ENCODE measurements at regions of chr22 and their contacts with region 1.

Region 1: DNA sequence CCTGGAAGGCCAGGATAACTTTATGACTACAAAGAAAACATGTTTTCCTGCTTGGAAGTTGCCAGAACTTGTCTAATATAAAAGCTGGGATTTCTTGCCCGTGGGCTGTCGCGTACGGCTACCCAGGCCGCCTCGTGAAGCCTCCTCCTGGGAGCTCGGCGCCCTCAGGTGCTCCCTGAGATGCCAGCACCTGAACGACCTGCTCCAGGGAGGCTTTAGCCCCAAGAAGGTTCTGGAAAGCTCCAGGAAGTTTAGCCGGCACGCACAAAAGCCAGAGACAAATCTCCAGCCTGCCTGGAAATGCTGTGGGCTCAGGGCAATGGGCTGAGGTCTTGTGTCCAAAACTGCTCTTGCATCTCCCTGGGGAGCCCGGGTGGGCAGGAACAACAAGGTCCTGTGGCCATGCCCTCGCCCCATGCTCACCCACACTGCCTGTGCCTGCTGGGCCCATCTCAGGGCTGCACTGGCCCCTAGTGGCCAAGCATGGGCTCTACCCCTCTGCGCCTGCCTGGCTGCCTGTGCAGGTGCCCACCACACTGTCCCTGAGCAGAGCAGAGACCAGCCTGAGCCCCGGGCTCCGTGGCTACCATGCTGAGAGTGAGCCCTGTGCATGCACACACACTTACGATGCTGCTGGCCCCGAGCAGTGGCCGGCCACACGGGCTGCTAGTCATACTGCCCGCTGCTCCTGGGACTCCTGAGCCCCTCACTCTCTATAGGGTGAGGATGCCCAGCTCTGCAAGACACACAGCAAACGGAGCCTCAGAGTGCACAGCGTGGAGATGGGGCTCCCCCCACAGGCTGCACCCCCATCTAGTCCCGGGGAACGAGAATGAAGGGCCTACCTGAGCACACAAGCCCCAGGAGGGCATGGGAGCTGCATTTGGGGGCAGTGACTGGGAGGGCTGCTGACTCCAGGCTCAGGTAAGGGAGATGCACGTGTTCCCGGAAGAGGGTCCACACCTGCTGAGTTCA is 4.9 kb upstream of the CELSR1 start:
- DNase-seq: peak; percentile 76
- H3K4me3 ChIP-seq: no peak overlapping the region
- H3K27ac ChIP-seq: no peak overlapping the region
- H3K4me1 ChIP-seq: peaks cover 10% of the 10 kb centered on the region
- H3K27me3 ChIP-seq: peaks cover 11% of the 10 kb centered on the region
- CTCF ChIP-seq: peak; percentile 96

Region 2: DNA sequence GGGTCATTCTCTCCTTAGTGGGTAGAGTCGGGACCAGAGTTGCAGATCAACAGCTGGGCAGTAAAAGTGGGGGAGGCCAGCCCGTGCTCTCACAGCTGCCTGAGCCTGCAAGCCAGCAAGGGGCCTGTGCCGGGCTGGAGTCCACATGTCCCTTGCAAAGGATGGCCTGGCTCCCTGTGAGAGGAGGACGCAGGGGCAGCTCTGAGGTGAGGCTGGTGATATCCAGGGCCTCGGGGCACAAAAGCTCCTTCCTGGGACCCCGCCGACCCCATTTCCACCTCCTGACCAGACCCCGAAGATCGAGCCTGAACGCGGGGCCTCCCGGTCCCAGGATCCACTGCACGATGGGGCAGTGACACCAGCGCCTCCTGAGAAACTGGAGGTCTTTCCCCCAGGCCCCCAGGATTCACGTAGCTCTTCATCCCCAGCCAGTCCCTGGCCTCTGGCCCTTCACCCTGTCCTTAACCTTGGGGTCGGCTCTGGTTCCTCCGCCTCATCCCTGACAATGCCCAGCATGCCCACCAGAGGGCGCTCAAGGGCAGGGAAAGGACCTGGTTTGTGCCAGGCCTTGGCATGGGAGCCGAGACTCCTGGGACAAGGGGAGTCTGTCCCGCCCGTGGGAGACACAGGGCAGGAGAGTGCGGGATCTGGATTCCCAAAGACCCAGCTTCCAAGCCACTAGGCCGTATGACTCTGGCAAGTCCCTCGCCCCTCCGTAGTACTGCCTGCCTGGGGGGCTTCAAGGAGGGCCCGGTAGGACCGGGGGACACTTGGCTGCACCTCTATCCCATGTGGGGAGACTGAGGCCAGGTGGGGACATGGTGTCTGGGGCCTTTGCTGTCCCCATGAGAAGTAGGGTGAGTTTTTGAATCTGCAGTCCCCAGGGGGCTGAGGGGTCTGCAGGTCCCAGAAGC is 547.5 kb before region 1 on chr22:
- CTCF ChIA-PET with region 1: no interaction called
- POLR2A ChIA-PET with region 1: no interaction called
- intact Hi-C with region 1: loop called (anchors 10 kb)
- DNase-seq: peak; percentile 80
- H3K4me3 ChIP-seq: no peak overlapping the region
- H3K27ac ChIP-seq: no peak overlapping the region
- H3K4me1 ChIP-seq: peaks cover 6% of the 10 kb centered on the region
- H3K27me3 ChIP-seq: no peaks in the 10 kb centered on the region
- CTCF ChIP-seq: peak; percentile 97

Region 3: DNA sequence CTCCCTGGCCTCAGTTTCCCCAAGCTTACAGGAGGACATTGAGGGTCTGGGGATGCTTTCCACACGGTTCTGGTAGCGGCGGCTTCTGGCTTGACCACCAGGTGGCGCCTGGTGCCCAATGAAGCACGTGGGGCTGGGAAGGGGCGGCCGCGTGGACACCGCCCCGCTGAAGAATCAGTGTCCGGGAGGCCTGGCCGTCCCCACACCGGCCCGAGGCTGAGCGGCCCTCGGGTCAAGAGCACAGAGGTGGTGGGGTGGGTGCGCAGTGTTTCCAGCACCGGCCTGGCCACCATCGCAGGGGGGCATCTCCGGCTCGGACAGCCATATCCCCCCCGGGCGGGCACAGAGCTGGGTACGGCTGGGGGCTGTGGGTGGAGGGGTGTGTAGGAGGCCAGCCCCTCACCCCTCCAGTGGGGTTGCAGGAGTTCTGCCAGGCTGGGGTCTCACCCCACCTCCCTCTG is 419.8 kb before region 1 on chr22:
- CTCF ChIA-PET with region 1: no interaction called
- POLR2A ChIA-PET with region 1: no interaction called
- intact Hi-C with region 1: loop called (anchors 2 kb)
- DNase-seq: peak; percentile 76
- H3K4me3 ChIP-seq: peak overlapping the region; percentile 23
- H3K27ac ChIP-seq: no peak overlapping the region
- H3K4me1 ChIP-seq: no peaks in the 10 kb centered on the region
- H3K27me3 ChIP-seq: no peaks in the 10 kb centered on the region
- CTCF ChIP-seq: peak; percentile 98

Region 4: DNA sequence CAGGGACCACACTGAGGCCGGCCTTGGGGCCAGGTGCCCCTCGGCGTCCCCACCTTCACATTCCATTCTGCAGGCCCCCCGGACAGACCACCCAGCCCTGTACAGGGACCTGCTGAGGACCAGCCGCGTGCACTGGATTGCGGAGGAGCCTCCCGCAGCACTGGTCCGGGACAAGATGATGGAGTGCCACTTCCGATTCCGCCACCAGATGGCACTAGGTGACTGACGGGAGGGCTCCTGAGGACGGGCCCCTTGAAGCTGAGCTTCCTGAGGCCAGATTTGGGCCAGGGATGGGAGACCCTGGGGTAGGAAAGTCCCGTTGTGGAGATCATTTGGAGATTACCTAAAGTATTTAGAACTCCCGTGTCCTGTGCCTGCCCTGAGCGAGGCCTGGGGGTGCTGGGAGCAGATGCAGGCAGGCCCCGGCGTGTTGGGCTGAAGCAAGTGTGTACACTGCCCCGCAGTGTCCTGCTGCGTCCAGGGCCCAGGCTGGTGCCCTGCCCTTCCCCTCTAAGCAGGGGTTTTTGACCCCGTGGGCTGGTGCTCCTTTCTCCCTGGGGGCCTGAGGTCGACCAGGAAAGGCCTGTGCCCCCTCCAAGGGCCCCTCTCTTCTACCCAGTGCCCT is 186.8 kb before region 1 on chr22:
- CTCF ChIA-PET with region 1: interaction called, 3 read pairs
- POLR2A ChIA-PET with region 1: no interaction called
- intact Hi-C with region 1: loop called (anchors 1 kb)
- DNase-seq: peak; percentile 81
- H3K4me3 ChIP-seq: no peak overlapping the region
- H3K27ac ChIP-seq: no peak overlapping the region
- H3K4me1 ChIP-seq: peaks cover 12% of the 10 kb centered on the region
- H3K27me3 ChIP-seq: no peaks in the 10 kb centered on the region
- CTCF ChIP-seq: peak; percentile 89

Region 5: DNA sequence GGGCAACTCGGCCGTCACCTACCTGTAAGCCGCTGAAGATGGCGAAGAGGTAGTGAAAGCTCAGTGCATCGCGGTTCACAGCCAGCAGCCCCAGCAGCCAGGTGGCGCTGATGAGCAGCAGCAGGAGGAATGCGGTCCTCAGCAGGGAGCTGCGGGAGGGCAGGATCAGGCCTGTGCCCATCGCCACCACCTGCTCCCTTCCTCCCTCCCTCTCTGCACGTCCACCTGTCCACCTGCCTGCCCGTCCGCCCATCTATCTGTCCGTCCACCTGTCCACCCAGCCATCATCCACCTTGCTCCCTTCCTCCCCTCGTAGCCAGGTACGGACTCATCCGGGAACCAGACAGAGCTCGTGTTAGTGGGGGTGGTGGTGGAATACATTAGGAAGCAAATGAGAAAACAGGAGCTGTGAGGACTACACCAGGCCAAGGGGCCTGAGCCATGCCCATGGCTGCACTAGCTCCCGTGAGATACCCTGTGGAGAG is 174.5 kb before region 1 on chr22:
- CTCF ChIA-PET with region 1: interaction called, 19 read pairs
- POLR2A ChIA-PET with region 1: no interaction called
- intact Hi-C with region 1: loop called (anchors 1 kb)
- DNase-seq: peak; percentile 61
- H3K4me3 ChIP-seq: no peak overlapping the region
- H3K27ac ChIP-seq: no peak overlapping the region
- H3K4me1 ChIP-seq: no peaks in the 10 kb centered on the region
- H3K27me3 ChIP-seq: no peaks in the 10 kb centered on the region
- CTCF ChIP-seq: peak; percentile 91

Region 6: GRCh38 chr22:46462726-46463371 is 79.4 kb before region 1 on chr22:
- CTCF ChIA-PET with region 1: no interaction called
- POLR2A ChIA-PET with region 1: no interaction called
- intact Hi-C with region 1: no loop called
- DNase-seq: peak; percentile 37
- H3K4me3 ChIP-seq: no peak overlapping the region
- H3K27ac ChIP-seq: no peak overlapping the region
- H3K4me1 ChIP-seq: peaks cover 10% of the 10 kb centered on the region
- H3K27me3 ChIP-seq: no peaks in the 10 kb centered on the region
- CTCF ChIP-seq: no peak

Measured in A673 (cell line).